Mammary epithelial cell (primary cell): ENCODE measurements at regions of chr12 and their contacts with region 1.

Region 1: DNA sequence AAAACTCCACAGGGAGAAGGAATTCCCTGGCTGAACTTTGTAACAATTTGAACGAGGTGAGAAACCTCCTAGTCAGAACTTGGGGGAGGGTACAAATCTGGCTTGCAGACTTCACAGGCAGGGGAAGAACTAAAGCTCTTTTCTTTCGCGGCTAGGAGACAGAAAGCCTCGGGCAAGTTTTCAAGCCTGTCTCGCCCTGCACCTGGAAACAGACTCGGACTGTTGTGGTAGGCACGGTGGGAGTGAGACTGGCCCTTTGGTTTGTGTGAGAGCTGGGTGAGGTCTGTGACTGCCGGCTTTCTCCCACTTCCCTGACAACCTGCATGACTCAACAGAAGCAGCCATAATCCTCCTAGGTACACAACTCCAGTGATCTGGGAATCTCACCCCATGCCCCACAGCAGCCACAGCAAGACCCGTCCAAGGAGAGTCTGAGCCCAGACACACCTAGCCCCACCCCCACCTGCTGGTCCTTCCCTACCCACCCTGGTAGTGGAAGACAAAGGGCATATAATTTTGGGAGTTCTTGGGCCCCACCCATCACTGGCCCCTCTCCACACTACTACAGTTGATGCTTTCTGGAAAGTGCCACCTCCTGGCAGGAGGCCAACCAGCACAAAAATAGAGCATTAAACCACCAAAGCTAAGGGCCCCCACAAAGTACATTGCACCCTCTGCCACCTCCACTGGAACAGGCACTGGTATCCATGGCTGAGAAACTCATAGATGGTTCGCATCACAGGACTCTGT is 102.7 kb upstream of the ST8SIA1 start:
- DNase-seq: peak; percentile 96
- H3K4me3 ChIP-seq: peak overlapping the region; percentile 30 to 44 (median 33)
- H3K27ac ChIP-seq: peak overlapping the region; percentile 94
- H3K4me1 ChIP-seq: peaks cover 15% of the 10 kb centered on the region
- H3K27me3 ChIP-seq: no peaks in the 10 kb centered on the region
- CTCF ChIP-seq: no peak

Region 2: GRCh38 chr12:22360774-22361173 is 76.4 kb before region 1 on chr12:
- CTCF ChIA-PET with region 1: no interaction called
- dilution Hi-C with region 1: no loop called
- in situ Hi-C with region 1: loop called in 1 of 2 experiments (anchors 10 kb)
- intact Hi-C with region 1: no loop called
- DNase-seq: no peak
- H3K4me3 ChIP-seq: no peak overlapping the region
- H3K27ac ChIP-seq: no peak overlapping the region
- H3K4me1 ChIP-seq: no peaks in the 10 kb centered on the region
- H3K27me3 ChIP-seq: no peaks in the 10 kb centered on the region
- CTCF ChIP-seq: no peak

Region 3: GRCh38 chr12:22409377-22410164 is 27.6 kb before region 1 on chr12:
- CTCF ChIA-PET with region 1: no interaction called
- dilution Hi-C with region 1: no loop called
- in situ Hi-C with region 1: no loop called
- intact Hi-C with region 1: loop called (anchors 1 kb)
- DNase-seq: no peak
- H3K4me3 ChIP-seq: no peak overlapping the region
- H3K27ac ChIP-seq: no peak overlapping the region
- H3K4me1 ChIP-seq: peaks cover 4% of the 10 kb centered on the region
- H3K27me3 ChIP-seq: no peaks in the 10 kb centered on the region
- CTCF ChIP-seq: no peak